Panc1 (cell line): ENCODE measurements at regions of chr20 and their contacts with region 1.

Region 1: GRCh38 chr20:33466303-33466646 is 22.7 kb upstream of the SNTA1 start:
- DNase-seq: no peak
- ATAC-seq: no peak
- H3K4me3 ChIP-seq: no peak overlapping the region
- H3K27ac ChIP-seq: no peak overlapping the region
- H3K4me1 ChIP-seq: no peaks in the 10 kb centered on the region
- H3K27me3 ChIP-seq: no peaks in the 10 kb centered on the region
- CTCF ChIP-seq: no peak

Region 2: DNA sequence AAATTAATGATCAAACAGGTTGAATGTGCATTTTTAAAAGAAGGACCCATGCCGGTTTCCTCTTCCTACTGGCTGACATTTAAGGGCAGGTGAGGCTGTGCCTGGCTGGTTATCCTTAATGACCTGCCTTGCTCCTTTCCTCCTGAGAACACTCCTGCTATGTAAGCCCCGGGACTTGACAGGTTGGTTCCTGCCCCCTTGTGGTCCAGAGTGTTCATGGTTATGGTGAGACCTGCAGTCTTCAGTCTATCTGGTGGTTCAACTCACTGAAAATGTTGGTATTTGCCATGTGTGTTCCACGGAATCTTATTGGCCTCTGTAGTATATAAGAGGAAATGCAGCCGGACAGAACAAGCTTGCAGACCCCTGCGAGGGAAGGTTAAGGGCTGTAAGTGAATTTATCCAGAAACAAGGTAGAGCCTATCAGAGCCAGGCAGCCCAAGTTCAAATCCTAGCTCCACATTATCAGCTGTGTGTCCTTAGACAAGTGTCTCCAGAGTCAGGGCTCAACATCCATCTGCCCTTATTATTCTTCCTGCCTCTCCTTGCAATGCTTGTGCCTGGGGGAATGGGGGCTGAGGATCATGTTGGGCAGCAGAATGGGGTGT is 254.4 kb before region 1 on chr20:
- CTCF ChIA-PET with region 1: no interaction called
- POLR2A ChIA-PET with region 1: no interaction called
- in situ Hi-C with region 1: no loop called
- intact Hi-C with region 1: no loop called
- DNase-seq: peak; percentile 27
- ATAC-seq: peak; percentile 96
- H3K4me3 ChIP-seq: no peak overlapping the region
- H3K27ac ChIP-seq: no peak overlapping the region
- H3K4me1 ChIP-seq: no peaks in the 10 kb centered on the region
- H3K27me3 ChIP-seq: peaks cover 12% of the 10 kb centered on the region
- CTCF ChIP-seq: peak; percentile 79

Region 3: DNA sequence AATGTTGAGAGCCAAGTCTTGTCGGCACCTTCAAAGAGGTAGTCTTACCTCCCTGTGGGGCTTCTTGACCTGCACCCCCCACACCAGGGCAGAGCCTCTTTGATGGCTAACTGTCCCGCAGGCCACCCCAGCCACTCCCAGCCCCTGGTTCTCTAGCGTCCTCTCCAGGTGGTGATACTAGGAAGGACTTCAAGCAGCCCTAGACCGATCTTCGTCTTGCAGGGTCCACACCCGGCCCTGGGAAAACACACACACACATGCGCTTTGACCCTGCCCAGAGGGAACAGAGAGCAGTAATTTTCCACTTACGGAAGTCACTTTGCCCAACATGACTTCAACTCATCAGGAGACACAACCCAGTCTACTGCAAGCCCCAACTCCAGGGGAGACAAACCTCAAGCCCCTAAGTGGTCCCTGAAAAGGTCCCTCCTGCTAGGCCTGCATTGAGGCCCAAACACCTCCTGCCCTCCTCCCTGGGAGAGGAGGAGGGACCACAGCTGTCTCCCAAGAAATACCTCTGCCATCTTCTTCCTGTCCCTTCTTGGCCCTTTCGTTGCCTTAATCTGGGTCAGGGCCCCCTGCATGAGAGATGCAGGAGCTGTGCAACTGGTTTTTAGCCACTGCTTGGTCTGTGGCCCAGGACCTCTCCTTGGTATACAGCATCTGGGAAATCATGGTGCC is 186.1 kb before region 1 on chr20:
- CTCF ChIA-PET with region 1: no interaction called
- POLR2A ChIA-PET with region 1: interaction called, 11 read pairs
- in situ Hi-C with region 1: no loop called
- intact Hi-C with region 1: no loop called
- DNase-seq: no peak
- ATAC-seq: no peak
- H3K4me3 ChIP-seq: no peak overlapping the region
- H3K27ac ChIP-seq: no peak overlapping the region
- H3K4me1 ChIP-seq: no peaks in the 10 kb centered on the region
- H3K27me3 ChIP-seq: no peaks in the 10 kb centered on the region; the same call in 1 of the 2 replicates
- CTCF ChIP-seq: no peak

Region 4: DNA sequence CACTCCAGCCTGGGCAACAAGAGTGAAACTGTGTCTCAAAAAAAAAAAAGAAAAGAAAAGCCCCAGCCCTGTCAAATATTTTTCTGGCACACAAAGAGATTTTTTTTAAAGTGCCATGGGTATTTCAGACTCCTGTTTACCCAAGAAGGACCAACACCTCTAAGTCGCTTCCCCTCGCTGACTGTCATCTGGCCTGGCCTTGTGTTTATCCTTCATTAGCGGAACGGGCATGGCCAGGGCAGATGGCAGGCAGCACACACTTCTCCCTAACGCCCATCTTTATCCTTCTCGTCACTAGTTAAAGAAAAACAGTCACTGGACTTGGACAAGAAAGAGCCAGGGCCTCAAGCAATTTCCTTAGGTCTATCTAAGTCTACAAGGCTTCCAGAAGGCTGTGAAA is 16.3 kb after region 1 on chr20:
- CTCF ChIA-PET with region 1: no interaction called
- POLR2A ChIA-PET with region 1: no interaction called
- in situ Hi-C with region 1: no loop called
- intact Hi-C with region 1: no loop called
- DNase-seq: no peak
- ATAC-seq: no peak
- H3K4me3 ChIP-seq: no peak overlapping the region
- H3K27ac ChIP-seq: no peak overlapping the region
- H3K4me1 ChIP-seq: no peaks in the 10 kb centered on the region
- H3K27me3 ChIP-seq: no peaks in the 10 kb centered on the region
- CTCF ChIP-seq: no peak